ENCODE measurements at regions of chr2 and their contacts with region 1.

Region 1: GRCh38 chr2:226813148-226813701 is 13.6 kb upstream of the IRS1 start:
- DNase-seq: peak; percentile 55
- ATAC-seq: peak; percentile 81
- H3K4me3 ChIP-seq: no peak overlapping the region
- H3K27ac ChIP-seq: no peak overlapping the region
- H3K4me1 ChIP-seq: no peaks in the 10 kb centered on the region
- H3K27me3 ChIP-seq: no peaks in the 10 kb centered on the region
- CTCF ChIP-seq: peak; percentile 75

Region 2: GRCh38 chr2:226984750-226985582 is 171.7 kb after region 1 on chr2:
- CTCF ChIA-PET with region 1: interaction called, 3 read pairs
- POLR2A ChIA-PET with region 1: no interaction called
- intact Hi-C with region 1: loop called (anchors 1 kb)
- DNase-seq: peak; percentile 75
- ATAC-seq: peak; percentile 83
- H3K4me3 ChIP-seq: no peak overlapping the region
- H3K27ac ChIP-seq: no peak overlapping the region
- H3K4me1 ChIP-seq: 0 out of 2 replicates have a peak, but pooled peaks cover 3% of the 10 kb centered on the region
- H3K27me3 ChIP-seq: no peaks in the 10 kb centered on the region
- CTCF ChIP-seq: peak; percentile 79

Region 3: DNA sequence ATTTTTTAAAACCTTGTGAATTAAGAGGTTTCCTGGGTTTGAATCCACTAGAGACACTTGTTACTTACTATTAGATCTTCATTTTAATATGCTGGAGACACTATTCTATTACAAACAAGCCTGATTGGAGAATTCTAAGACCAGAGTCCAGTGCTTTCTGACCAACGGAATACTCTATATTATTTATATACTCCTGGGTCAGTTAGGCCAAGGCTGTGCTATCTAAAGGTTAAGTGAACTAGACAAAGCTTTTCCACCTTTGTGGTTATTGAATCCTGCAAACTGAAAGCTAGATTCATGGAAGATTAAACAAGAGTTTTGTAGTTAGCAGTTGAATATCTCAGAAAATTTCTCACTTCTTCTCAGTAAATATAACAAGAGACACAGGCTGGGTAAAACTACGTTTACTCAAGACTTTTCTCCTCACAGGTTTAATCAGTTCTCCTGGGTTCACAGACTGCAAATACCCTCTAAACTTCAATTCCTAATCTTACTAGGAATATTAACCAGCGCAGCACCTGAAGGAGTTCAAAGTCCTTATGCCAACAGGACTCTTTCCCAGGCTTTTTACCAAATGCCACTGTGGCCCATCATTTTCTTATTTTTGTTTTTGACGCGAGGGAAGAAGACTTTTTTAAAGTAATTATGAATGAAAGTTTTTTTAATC is 284.4 kb after region 1 on chr2:
- CTCF ChIA-PET with region 1: no interaction called
- POLR2A ChIA-PET with region 1: no interaction called
- intact Hi-C with region 1: no loop called
- DNase-seq: no peak
- ATAC-seq: no peak
- H3K4me3 ChIP-seq: no peak overlapping the region
- H3K27ac ChIP-seq: no peak overlapping the region
- H3K4me1 ChIP-seq: no peaks in the 10 kb centered on the region
- H3K27me3 ChIP-seq: no peaks in the 10 kb centered on the region
- CTCF ChIP-seq: no peak

Region 4: DNA sequence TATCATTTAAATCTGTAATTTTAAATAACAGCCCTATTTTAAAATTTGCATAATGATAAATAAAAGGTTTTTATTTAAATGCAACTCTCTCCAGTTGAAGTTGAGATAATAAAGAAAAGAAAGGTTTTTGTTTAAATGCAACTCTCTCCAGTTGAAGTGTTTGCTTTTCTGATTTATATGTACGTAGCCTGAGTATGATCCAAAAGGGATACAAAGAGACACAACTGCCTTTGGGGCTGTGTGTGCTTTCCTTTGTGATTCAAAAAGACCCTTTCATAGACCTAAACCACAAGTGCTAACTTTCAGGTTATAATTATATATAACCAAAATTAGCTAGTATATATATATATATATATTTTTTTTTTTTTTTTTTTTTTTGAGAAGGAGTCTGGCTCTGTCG is 435.7 kb after region 1 on chr2:
- CTCF ChIA-PET with region 1: no interaction called
- POLR2A ChIA-PET with region 1: no interaction called
- intact Hi-C with region 1: no loop called
- DNase-seq: no peak
- ATAC-seq: no peak
- H3K4me3 ChIP-seq: no peak overlapping the region
- H3K27ac ChIP-seq: no peak overlapping the region
- H3K4me1 ChIP-seq: no peaks in the 10 kb centered on the region
- H3K27me3 ChIP-seq: no peaks in the 10 kb centered on the region
- CTCF ChIP-seq: no peak

Measured in PC-3 (cell line).